ENCODE measurements at regions of chr12 and their contacts with region 1.

Region 1: GRCh38 chr12:76790564-76791552 is 26.9 kb downstream of the ZDHHC17 start:
- DNase-seq: no peak
- H3K4me3 ChIP-seq: no peak overlapping the region
- H3K27ac ChIP-seq: no peak overlapping the region
- H3K4me1 ChIP-seq: peaks cover 11% of the 10 kb centered on the region
- H3K27me3 ChIP-seq: no peaks in the 10 kb centered on the region
- CTCF ChIP-seq: peak; percentile 40 to 71 (median 55)
- POLR2A ChIP-seq: no peak

Region 2: DNA sequence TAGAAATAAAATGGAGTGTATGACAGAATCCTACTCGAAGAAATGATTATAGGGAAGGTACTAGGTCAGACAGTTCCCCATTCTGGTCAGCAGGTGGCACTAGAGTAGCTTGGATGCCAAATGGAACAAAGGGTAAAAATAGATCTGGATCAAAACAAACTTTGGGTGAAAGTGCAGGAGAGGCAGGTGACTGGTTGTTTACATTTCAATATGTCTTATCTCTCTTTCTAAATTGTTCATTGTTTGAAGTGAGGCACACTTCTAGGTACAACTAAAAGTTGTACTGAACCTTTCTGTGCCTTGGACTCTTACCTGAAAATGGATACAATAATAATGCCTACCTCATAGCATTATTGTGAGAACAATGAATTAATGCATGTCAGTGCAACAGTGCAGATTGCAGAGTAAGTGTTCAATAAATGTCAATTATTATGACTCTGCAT is 169.3 kb before region 1 on chr12:
- intact Hi-C with region 1: loop called (anchors 10 kb)
- DNase-seq: peak; percentile 80
- H3K4me3 ChIP-seq: no peak overlapping the region
- H3K27ac ChIP-seq: no peak overlapping the region
- H3K4me1 ChIP-seq: no peaks in the 10 kb centered on the region
- H3K27me3 ChIP-seq: no peaks in the 10 kb centered on the region
- CTCF ChIP-seq: peak; percentile 90 to 92 (median 91)
- POLR2A ChIP-seq: no peak

Region 3: GRCh38 chr12:76738934-76739586 is 51.8 kb before region 1 on chr12:
- intact Hi-C with region 1: no loop called
- DNase-seq: no peak
- H3K4me3 ChIP-seq: no peak overlapping the region
- H3K27ac ChIP-seq: no peak overlapping the region
- H3K4me1 ChIP-seq: no peaks in the 10 kb centered on the region
- H3K27me3 ChIP-seq: no peaks in the 10 kb centered on the region
- CTCF ChIP-seq: no peak
- POLR2A ChIP-seq: no peak

Region 4: DNA sequence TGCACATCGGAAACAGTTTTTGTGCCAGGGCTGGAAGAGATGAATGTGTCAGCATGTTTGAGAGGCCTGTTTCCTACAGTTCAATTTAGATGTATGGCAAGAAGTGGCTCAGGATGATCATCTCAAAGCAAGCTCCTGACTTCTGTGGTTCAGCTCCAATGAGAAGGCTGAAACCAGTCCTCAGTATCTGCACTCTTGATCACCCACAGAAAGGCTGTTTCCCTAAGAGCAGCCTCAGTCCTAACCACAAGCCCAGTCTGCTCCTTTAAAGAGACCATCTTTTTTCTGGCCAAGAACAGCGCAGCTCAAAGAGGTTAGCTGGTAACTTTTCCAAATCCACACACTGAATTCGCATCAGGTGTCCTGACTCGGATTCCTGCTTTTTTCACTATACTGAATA is 68.8 kb after region 1 on chr12:
- intact Hi-C with region 1: no loop called
- DNase-seq: no peak
- H3K4me3 ChIP-seq: no peak overlapping the region
- H3K27ac ChIP-seq: no peak overlapping the region
- H3K4me1 ChIP-seq: no peaks in the 10 kb centered on the region
- H3K27me3 ChIP-seq: no peaks in the 10 kb centered on the region
- CTCF ChIP-seq: no peak
- POLR2A ChIP-seq: no peak

Region 5: GRCh38 chr12:76915361-76916169 is 124.7 kb after region 1 on chr12:
- intact Hi-C with region 1: no loop called
- DNase-seq: no peak
- H3K4me3 ChIP-seq: no peak overlapping the region
- H3K27ac ChIP-seq: peak overlapping the region; percentile 33 to 47
- H3K4me1 ChIP-seq: peaks cover 7% of the 10 kb centered on the region
- H3K27me3 ChIP-seq: no peaks in the 10 kb centered on the region
- CTCF ChIP-seq: no peak
- POLR2A ChIP-seq: no peak